Left ventricle myocardium inferior (tissue), 1 donor: ENCODE measurements at regions of chr1 and their contacts with region 1.

Region 1: DNA sequence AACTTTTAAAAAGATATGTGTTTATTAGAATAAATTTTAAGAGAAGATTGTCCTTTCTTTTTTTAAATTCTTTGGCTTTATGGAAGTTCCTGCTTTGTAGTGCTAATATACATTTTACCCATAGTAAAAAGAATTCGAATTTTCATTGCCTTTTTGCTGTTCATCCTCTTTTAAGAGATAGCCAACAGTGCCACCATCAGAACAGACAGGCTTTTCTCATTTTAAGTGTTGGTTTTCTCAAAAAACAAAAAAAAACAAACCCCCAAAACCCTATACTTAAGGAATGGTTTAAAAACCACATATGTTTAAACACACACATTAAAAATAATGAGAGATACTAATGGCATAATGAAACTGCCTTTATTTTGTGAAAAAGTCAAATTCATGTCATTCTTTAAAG is 118.8 kb downstream of the NEK7 start:
- DNase-seq: no peak
- H3K4me3 ChIP-seq: no peak overlapping the region
- H3K27ac ChIP-seq: no peak overlapping the region
- H3K4me1 ChIP-seq: peaks cover 67% of the 10 kb centered on the region
- H3K27me3 ChIP-seq: no peaks in the 10 kb centered on the region
- CTCF ChIP-seq: no peak

Region 2: DNA sequence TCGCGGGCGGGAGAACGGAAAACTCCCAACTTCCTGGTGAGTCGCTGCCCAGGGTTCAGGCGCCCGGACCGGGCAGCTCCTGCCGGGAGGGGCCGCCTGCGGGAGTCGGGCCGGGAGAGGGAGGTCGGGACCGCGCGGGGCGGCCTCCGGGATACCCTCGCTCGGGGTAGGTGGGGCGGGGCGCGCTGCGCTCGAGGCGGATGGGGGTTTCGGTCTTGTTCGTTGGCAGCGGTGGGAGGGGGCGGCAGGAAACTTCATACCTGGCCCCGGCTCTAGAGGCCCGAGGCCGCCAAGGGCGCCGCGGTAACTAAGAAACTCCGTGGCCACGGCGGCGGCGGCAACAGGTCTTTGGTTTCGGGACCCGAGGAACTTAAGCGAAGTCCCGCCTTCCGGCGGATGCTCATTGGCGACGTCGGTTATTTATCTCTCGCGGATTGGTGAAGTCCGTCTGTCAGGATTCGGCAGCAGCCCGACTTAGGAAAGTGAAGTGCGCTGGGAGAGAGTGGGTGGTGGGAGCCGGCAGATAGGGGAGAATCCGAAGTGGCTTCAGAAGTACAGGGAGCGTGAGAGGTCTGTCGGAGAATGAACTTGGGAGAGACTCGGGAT is 118.3 kb before region 1 on chr1:
- intact Hi-C with region 1: loop called (anchors 10 kb)
- DNase-seq: peak; percentile 90
- H3K4me3 ChIP-seq: peak overlapping the region; percentile 90
- H3K27ac ChIP-seq: peak overlapping the region; percentile 99
- H3K4me1 ChIP-seq: peaks cover 78% of the 10 kb centered on the region
- H3K27me3 ChIP-seq: no peaks in the 10 kb centered on the region
- CTCF ChIP-seq: no peak

Region 3: GRCh38 chr1:198175423-198176170 is 100.0 kb before region 1 on chr1:
- intact Hi-C with region 1: no loop called
- DNase-seq: no peak
- H3K4me3 ChIP-seq: no peak overlapping the region
- H3K27ac ChIP-seq: peak overlapping the region; percentile 15
- H3K4me1 ChIP-seq: peaks cover 100% of the 10 kb centered on the region
- H3K27me3 ChIP-seq: no peaks in the 10 kb centered on the region
- CTCF ChIP-seq: no peak